ENCODE measurements at regions of chr9 and their contacts with region 1.

Region 1: DNA sequence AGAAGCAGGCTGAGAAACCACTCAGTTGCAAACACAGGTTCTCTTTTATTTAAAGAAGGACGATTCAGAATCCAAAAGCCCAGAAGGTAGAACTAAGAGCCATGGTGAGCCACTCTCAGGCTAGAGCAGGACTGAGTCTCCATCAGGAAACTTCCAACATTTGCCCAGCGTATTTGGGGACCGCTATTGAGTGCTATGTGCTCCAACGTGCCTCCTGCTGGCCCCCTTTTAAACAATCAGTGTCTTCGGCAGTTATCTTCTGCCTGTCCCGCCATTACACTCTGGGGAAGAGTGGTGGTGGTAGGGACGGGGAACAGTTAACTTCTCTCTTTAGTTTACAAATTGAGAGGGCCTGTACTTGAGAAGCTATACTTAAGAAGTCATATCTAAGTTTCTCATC is 78.1 kb downstream of the DENND1A start:
- DNase-seq: no peak
- ATAC-seq: no peak
- H3K4me3 Mint-ChIP-seq: no peak overlapping the region
- H3K27ac Mint-ChIP-seq: no peak overlapping the region
- H3K4me1 Mint-ChIP-seq: peaks cover 12% of the 10 kb centered on the region
- H3K27me3 Mint-ChIP-seq: no peaks in the 10 kb centered on the region

Region 2: DNA sequence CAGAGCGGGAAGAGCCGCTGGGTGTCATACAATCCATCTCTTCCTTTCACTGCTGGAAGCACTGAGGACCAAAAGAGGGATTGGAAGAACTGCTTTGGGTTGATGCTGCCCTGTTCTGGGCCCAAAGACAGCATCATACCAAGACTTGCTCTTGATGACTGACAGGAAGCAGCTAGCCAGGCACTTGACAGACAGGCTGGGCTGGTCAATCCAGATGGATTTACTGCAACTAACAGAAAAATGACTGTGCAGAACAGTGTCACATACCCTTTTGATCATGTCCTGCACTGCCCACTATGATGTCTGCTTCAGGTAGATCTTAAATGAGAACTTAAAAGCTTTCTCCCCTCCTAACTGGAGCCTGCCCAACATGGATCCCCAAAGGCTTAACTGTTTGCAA is 338.3 kb before region 1 on chr9:
- CTCF ChIA-PET with region 1: no interaction called
- POLR2A ChIA-PET with region 1: no interaction called
- intact Hi-C with region 1: no loop called
- DNase-seq: no peak
- ATAC-seq: no peak
- H3K4me3 Mint-ChIP-seq: no peak overlapping the region
- H3K27ac Mint-ChIP-seq: no peak overlapping the region
- H3K4me1 Mint-ChIP-seq: no peaks in the 10 kb centered on the region
- H3K27me3 Mint-ChIP-seq: no peaks in the 10 kb centered on the region

Region 3: DNA sequence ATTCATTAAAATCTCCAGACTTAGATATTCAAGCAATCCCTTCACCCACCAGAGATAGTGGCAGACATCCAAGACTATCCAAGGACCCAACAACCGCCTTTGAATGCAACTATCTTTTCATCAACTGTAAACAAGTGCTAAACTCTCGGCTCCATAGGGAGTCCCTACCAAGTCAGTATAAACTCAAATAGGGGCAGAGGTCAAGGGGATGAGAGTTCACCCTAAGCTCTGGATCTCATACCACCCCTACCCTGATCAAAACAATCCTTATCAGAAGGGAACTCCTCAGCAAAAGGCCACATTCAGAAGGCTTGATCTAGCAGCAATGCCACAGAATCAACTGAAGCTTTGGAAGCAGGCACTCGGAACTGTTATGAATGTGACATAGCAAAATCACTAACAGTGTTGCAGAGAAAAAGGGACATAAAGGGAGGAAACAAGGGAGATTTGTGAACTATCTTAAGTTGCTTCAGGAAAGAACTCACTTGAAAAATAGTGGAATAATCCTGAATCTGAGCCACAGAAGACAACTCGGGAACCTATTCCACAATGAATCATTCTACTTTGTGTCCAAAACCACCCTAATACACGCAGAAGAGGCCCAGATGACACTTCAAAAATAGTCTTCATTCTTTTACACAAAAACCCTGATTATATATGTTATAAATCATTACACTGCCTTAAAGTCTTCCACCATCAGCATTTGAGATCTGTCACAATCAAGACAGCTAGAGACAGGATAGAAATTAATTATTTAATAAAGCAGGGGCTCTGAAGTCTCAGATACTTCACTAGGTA is 869.5 kb after region 1 on chr9:
- CTCF ChIA-PET with region 1: no interaction called
- POLR2A ChIA-PET with region 1: no interaction called
- intact Hi-C with region 1: loop called in 1 of 2 experiments (anchors 5 kb)
- DNase-seq: no peak
- ATAC-seq: no peak
- H3K4me3 Mint-ChIP-seq: no peak overlapping the region
- H3K27ac Mint-ChIP-seq: no peak overlapping the region
- H3K4me1 Mint-ChIP-seq: peaks cover 12% of the 10 kb centered on the region
- H3K27me3 Mint-ChIP-seq: peaks cover 8% of the 10 kb centered on the region

Measured in activated CD4-positive, alpha-beta T cell treated with anti-CD3 and anti-CD28 coated beads for 36 hours (primary cell).